PC-9 (cell line): ENCODE measurements at regions of chr3 and their contacts with region 1.

Region 1: GRCh38 chr3:171950373-171950772 is 89.0 kb upstream of the FNDC3B start:
- DNase-seq: peak; percentile 21 to 65
- H3K4me3 ChIP-seq: no peak overlapping the region
- H3K27ac ChIP-seq: peak overlapping the region; percentile 19
- H3K4me1 ChIP-seq: peaks cover 56% of the 10 kb centered on the region
- H3K27me3 ChIP-seq: no peaks in the 10 kb centered on the region
- CTCF ChIP-seq: no peak

Region 2: GRCh38 chr3:171874251-171874679 is 76.1 kb before region 1 on chr3:
- CTCF ChIA-PET with region 1: no interaction called
- POLR2A ChIA-PET with region 1: no interaction called
- intact Hi-C with region 1: loop called (anchors 5 kb)
- DNase-seq: peak; percentile 44 to 49
- H3K4me3 ChIP-seq: no peak overlapping the region
- H3K27ac ChIP-seq: 0 out of 2 replicates have a peak overlapping the region, but pooled peaks have one; percentile 0
- H3K4me1 ChIP-seq: peaks cover 15% of the 10 kb centered on the region; the same call in 1 of the 2 replicates
- H3K27me3 ChIP-seq: no peaks in the 10 kb centered on the region
- CTCF ChIP-seq: no peak

Region 3: GRCh38 chr3:171890398-171890797 is 60.0 kb before region 1 on chr3:
- CTCF ChIA-PET with region 1: no interaction called
- POLR2A ChIA-PET with region 1: no interaction called
- intact Hi-C with region 1: no loop called
- DNase-seq: no peak
- H3K4me3 ChIP-seq: no peak overlapping the region
- H3K27ac ChIP-seq: no peak overlapping the region
- H3K4me1 ChIP-seq: no peaks in the 10 kb centered on the region
- H3K27me3 ChIP-seq: no peaks in the 10 kb centered on the region
- CTCF ChIP-seq: no peak

Region 4: GRCh38 chr3:171994646-171995428 is 44.5 kb after region 1 on chr3:
- CTCF ChIA-PET with region 1: no interaction called
- POLR2A ChIA-PET with region 1: no interaction called
- intact Hi-C with region 1: no loop called
- DNase-seq: peak in 1 of 2 experiments; percentile 48
- H3K4me3 ChIP-seq: no peak overlapping the region
- H3K27ac ChIP-seq: no peak overlapping the region
- H3K4me1 ChIP-seq: peaks cover 4% of the 10 kb centered on the region; the same call in 1 of the 2 replicates
- H3K27me3 ChIP-seq: no peaks in the 10 kb centered on the region
- CTCF ChIP-seq: no peak